Activated CD4-positive, alpha-beta T cell treated with anti-CD3 and anti-CD28 coated beads for 36 hours (primary cell): ENCODE measurements at regions of chr7 and their contacts with region 1.

Region 1: DNA sequence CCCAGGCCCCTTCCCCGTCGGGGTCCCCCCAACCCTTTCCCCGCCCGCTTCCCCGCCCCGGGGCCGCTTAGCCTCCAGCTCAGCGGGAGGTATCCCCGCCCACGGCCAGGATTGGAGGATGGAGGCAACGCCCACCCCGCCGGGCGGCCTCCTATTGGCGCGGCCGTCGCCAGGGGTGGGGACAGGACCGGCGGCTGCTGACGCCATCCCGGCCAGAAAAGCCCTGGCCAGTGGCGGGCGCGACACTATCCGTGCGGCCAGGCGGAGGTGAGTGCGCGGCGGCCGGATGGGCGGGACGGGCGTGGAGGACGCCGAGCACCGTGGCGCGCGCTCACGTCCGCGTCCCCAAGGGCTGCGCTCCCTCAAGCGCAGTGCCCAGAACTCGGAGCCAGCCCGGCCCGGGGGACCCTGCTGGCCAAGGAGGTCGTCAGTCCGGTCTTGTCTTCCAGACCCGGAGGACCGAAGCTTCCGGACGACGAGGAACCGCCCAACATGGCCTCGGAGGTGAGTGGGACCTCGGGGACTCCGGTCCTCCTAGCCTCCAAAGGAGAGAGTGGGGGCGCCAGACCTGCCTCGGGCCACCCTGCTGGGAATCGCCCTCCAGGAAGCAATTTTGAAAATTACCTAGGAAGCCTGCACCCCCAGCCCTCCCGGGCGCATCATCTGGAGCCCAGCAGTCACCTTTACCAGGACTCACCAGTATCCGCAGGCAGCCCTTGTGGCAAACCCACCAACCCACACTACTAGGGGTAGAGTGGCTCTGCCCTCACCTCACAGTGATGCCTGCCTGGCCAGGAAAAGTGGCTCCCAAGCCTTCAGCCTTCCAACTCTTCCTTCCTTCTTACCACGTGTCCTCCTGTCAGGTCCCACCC is at the start of gene ASL:
- DNase-seq: peak; percentile 94
- ATAC-seq: peak; percentile 99
- H3K4me3 Mint-ChIP-seq: peak within 1 kb of the TSS; percentile 63
- H3K27ac Mint-ChIP-seq: no peak within 1 kb of the TSS
- H3K4me1 Mint-ChIP-seq: peaks cover 15% of the 10 kb centered on the region
- H3K27me3 Mint-ChIP-seq: no peaks in the 10 kb centered on the region
- total RNA-seq, gene ASL: 12.7 to 18.5 TPM

Region 2: DNA sequence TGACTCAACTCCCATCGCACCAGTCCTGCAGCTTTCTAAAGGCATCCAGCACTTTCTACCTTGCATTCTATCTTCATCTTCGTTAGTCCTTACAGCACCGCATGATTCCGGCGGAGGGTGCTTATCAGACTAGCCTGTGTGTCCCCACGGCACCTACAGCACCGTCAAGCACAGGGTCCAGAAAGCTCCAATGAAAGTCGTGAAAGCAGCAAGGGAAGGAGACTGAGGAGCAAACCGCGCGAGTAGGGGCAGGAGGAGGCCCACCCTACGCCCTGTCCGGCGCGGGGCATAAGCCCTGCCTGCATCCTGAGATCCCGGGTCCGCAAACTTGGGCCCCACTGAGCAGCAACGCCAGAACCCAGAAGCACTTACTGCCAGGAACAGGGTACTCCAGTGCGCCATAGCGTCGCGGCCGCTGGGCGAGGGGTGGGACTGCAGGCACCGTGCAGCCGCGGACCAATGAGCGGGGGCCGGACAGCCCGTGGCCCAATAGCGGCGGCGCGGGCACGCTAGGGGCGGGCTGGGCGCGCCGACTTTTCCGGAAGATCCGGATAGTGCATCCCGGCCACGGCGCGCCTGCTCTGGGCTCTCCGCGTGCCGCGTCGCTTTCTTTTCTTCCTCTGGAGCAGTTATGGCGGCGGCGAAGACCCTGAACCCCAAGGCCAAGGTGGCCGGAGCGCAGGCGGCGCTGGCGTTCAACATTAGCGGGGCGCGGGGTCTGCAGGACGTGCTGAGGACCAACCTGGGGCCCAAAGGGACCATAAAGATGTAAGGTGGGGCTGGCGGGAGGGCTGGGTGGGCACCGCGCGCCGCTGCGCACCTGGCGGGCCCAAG is 325.1 kb before region 1 on chr7:
- CTCF ChIA-PET with region 1: no interaction called
- POLR2A ChIA-PET with region 1: no interaction called
- intact Hi-C with region 1: loop called in 1 of 2 experiments (anchors 1 kb)
- DNase-seq: peak; percentile 93
- ATAC-seq: peak; percentile 99
- H3K4me3 Mint-ChIP-seq: peak overlapping the region; percentile 95
- H3K27ac Mint-ChIP-seq: peak overlapping the region; percentile 94
- H3K4me1 Mint-ChIP-seq: peaks cover 31% of the 10 kb centered on the region
- H3K27me3 Mint-ChIP-seq: no peaks in the 10 kb centered on the region

Region 3: GRCh38 chr7:66099616-66100474 is 24.0 kb after region 1 on chr7:
- CTCF ChIA-PET with region 1: no interaction called
- POLR2A ChIA-PET with region 1: no interaction called
- intact Hi-C with region 1: loop called in 1 of 2 experiments (anchors 1 kb)
- DNase-seq: peak; percentile 58
- ATAC-seq: peak; percentile 89
- H3K4me3 Mint-ChIP-seq: peak overlapping the region; percentile 73
- H3K27ac Mint-ChIP-seq: peak overlapping the region; percentile 93
- H3K4me1 Mint-ChIP-seq: peaks cover 11% of the 10 kb centered on the region
- H3K27me3 Mint-ChIP-seq: no peaks in the 10 kb centered on the region

Region 4: DNA sequence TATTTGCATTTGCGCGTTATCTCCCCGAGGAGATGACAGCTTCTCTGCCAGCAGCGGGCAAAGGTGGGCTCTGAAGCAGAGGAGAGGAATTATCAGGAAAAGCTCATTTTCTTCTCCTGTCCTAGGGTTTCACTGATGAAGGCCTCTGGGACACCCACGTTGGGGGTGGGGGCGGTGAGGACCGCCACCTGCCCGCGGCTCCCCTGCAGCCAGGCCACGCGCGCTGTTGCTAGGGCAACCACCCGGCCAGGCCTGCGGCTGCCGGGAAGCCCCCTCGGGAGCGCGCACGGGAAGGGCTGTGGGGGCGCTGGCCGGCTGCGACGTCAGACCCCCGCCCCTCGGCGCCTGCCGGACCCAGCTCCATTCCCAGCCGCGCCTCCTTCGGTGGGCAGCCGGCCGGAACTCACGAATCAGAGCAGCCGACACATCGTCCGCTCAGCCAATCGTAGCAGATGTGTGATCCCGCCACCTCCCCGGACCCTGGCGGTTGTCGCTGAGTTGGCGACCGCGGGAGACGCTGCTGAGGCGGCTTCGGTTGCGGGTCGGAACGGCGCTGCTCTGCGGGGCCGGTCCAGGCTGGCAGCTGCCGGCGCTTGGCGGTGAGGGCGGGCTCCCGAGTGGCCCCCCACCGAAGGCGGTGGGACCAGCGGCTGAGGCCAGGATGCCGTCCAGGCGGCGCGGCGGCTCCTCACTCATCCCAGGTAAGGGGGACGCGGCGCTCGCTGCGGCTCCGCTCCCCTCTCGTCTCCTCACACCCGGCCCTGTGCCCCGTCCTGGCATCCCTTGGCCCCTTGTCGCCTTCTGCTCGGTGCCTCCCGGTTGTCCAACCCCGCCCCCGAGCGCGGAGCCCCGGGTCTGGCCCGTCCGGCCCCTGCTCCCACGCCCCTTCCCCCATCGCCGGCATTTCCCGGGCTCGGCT is 129.3 kb after region 1 on chr7 and contains the start of gene TPST1:
- CTCF ChIA-PET with region 1: no interaction called
- POLR2A ChIA-PET with region 1: no interaction called
- intact Hi-C with region 1: loop called in 1 of 2 experiments (anchors 1 kb)
- DNase-seq: peak; percentile 88
- ATAC-seq: peak; percentile 96
- H3K4me3 Mint-ChIP-seq: peak within 1 kb of the TSS; percentile 81
- H3K27ac Mint-ChIP-seq: peak within 1 kb of the TSS; percentile 32
- H3K4me1 Mint-ChIP-seq: peaks cover 33% of the 10 kb centered on the region
- H3K27me3 Mint-ChIP-seq: peaks cover 17% of the 10 kb centered on the region
- total RNA-seq, gene TPST1: 1.0 to 1.1 TPM